Heart left ventricle (tissue), 16 donors: ENCODE measurements at regions of chr11 and their contacts with region 1.

Region 1: GRCh38 chr11:8338138-8338537 is 74.5 kb upstream of the LMO1 start:
- DNase-seq: peak in 4 of 5 donors; percentile 34 to 70 (median 50)
- ATAC-seq: peak in 3 of 4 donors; percentile 50 to 77 (median 61)
- H3K4me3 ChIP-seq: no peak overlapping the region
- H3K27ac ChIP-seq: no peak overlapping the region
- H3K4me1 ChIP-seq: no peaks in the 10 kb centered on the region
- H3K27me3 ChIP-seq: no peaks in the 10 kb centered on the region
- CTCF ChIP-seq: peak; percentile 46 to 73 (median 61)
- POLR2A ChIP-seq: no peak

Region 2: GRCh38 chr11:8283465-8284230 is 54.5 kb before region 1 on chr11:
- intact Hi-C with region 1: no loop called
- DNase-seq: peak in 1 of 5 donors; percentile 10
- ATAC-seq: peak; percentile 41 to 76 (median 51)
- H3K4me3 ChIP-seq: peak overlapping the region in 10 of 12 donors; percentile 20 to 44 (median 36)
- H3K27ac ChIP-seq: peak overlapping the region in 3 of 12 donors; percentile 22 to 49 (median 38)
- H3K4me1 ChIP-seq: peaks cover 0 to 15% (median 6%) of the 10 kb centered on the region in 12 donors
- H3K27me3 ChIP-seq: peaks cover 0 to 12% (median 0%) of the 10 kb centered on the region in 9 donors
- CTCF ChIP-seq: no peak
- POLR2A ChIP-seq: no peak

Region 3: GRCh38 chr11:8389029-8389996 is 51.2 kb after region 1 on chr11:
- intact Hi-C with region 1: loop called in 1 of 10 experiments (anchors 5 kb)
- DNase-seq: peak in 1 of 5 donors; percentile 19
- ATAC-seq: peak in 3 of 4 donors; percentile 41 to 56 (median 43)
- H3K4me3 ChIP-seq: peak overlapping the region in 2 of 12 donors; percentile 23 to 38
- H3K27ac ChIP-seq: peak overlapping the region in 1 of 12 donors; percentile 62
- H3K4me1 ChIP-seq: peaks cover 0 to 21% (median 5%) of the 10 kb centered on the region in 12 donors
- H3K27me3 ChIP-seq: no peaks in the 10 kb centered on the region
- CTCF ChIP-seq: no peak
- POLR2A ChIP-seq: no peak